GM12878 (cell line): ENCODE measurements at regions of chr1 and their contacts with region 1.

Region 1: GRCh38 chr1:185317034-185317885 is at the start of gene IVNS1ABP:
- DNase-seq: peak; percentile 86
- ATAC-seq: peak; percentile 77
- H3K4me3 ChIP-seq: peak within 1 kb of the TSS; percentile 79
- H3K27ac ChIP-seq: peak within 1 kb of the TSS; percentile 98
- H3K4me1 ChIP-seq: no peaks in the 10 kb centered on the region; the same call in 1 of the 2 replicates
- H3K27me3 ChIP-seq: no peaks in the 10 kb centered on the region
- CTCF ChIP-seq: peak; percentile 44 to 70 (median 57)
- EP300 ChIP-seq: 0 out of 4 replicates have a peak, but pooled peaks of 1 of the 2 experiments have one; percentile 4
- POLR2A ChIP-seq: peak; percentile 100
- RAD21 ChIP-seq: peak; percentile 70
- polyA plus RNA-seq, gene IVNS1ABP: 19.2 to 29.2 TPM

Region 2: DNA sequence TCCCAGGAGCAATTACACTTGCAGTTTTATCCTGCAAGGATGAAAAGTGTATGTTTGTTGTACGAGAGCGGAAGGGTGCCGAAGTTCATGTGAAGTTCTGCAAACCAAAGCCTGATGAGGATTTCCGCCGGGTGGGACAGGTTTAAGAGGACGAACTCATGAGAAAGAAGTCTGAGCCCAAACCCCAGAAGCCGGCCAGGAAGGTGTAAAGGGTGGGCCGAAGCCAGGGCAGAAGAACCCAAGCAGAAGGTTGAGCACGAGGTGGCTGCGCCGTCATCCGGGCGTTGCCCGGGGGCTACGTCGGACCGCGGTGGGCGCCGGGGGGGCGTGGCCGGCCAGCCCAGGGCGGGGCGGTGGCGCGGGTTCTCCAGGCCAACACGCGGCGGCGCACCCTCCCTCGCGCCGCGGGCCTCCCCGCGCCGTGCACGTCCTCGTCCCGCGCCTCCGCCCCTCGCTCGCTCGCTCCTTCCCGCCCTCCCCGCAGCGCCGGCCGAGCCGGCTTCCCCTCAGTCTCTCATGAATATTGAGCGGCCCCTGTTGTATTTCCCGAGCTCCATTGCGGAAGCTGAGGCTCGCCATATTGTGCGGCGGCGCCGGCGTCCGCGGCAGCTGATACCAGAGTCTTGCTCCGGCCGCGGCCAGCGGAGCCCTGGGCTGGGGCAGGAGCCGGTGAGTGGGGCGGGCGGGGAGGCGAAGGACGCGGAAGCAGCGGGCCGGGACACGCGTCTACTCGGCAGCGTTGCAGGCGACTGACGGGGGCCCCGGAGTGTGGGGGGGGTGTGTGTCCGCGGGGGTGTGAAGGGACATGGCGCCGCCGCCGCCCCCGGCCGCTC is 272.1 kb before region 1 on chr1 and contains the start of gene RNF2:
- CTCF ChIA-PET with region 1: no interaction called
- POLR2A ChIA-PET with region 1: no interaction called
- RAD21 ChIA-PET with region 1: no interaction called
- SMC1A ChIA-PET with region 1: no interaction called
- in situ Hi-C with region 1: no loop called
- intact Hi-C with region 1: loop called (anchors 2 kb)
- DNase-seq: peak; percentile 13
- ATAC-seq: peak; percentile 92
- H3K4me3 ChIP-seq: peak within 1 kb of the TSS; percentile 73
- H3K27ac ChIP-seq: no peak within 1 kb of the TSS
- H3K4me1 ChIP-seq: no peaks in the 10 kb centered on the region
- H3K27me3 ChIP-seq: no peaks in the 10 kb centered on the region
- CTCF ChIP-seq: no peak; a peak in 1 of 6 replicates
- EP300 ChIP-seq: no peak
- POLR2A ChIP-seq: peak; percentile 69
- RAD21 ChIP-seq: 0 out of 2 replicates have a peak, but pooled peaks have one; percentile 13
- polyA plus RNA-seq, gene RNF2: 4.8 to 5.2 TPM

Region 3: DNA sequence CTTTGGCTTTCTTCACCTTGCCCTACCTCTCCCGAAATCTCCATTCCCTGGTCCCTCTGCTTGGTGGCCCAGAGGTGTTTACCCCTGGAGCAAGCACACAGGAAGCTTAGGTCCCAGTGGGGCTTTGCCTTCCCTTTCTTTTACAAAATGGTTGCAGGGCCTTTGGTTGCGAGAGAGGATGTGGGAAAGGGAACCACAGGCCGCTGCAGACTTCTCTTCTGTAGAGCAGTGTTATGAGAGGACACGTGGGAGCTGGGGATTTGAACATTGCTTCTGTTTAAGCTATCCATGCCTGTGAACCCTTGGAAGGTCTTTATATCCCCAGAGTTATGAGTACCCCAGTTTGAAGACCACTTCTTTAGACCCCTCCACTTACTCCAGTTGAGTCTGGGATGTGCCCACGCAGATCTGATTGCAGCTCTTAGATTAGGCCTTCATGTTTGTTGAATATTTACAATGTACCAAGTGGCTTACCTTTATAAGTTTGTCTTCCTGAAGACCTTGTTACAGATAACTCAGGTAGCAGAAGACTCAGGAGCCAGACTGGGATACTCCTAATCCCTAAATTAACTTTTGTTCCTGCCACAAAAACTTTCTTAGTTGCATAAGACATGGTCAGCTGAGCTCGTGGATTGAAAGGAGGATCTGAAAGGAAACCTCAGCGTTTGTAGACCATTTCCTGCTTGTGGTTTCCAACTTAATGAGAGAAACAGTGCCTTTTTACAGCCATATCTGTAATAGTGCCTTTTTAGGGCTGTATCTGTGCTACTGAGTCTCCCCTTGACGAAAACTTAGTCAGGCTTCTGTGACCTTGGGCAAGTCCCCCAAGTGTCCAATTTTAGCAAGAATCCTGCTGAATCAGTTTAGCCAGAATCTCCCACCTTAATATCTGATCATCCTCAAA is 21.7 kb after region 1 on chr1:
- CTCF ChIA-PET with region 1: interaction called, 29 read pairs
- POLR2A ChIA-PET with region 1: interaction called, 15 read pairs
- RAD21 ChIA-PET with region 1: interaction called, 36 read pairs
- SMC1A ChIA-PET with region 1: interaction called, 54 read pairs
- in situ Hi-C with region 1: no loop called
- intact Hi-C with region 1: loop called (anchors 1 kb)
- DNase-seq: peak; percentile 86
- ATAC-seq: peak; percentile 97
- H3K4me3 ChIP-seq: no peak overlapping the region
- H3K27ac ChIP-seq: peak overlapping the region; percentile 59
- H3K4me1 ChIP-seq: peaks cover 21% of the 10 kb centered on the region
- H3K27me3 ChIP-seq: no peaks in the 10 kb centered on the region
- CTCF ChIP-seq: no peak
- EP300 ChIP-seq: peak; percentile 93 to 97
- POLR2A ChIP-seq: no peak
- RAD21 ChIP-seq: no peak

Region 4: GRCh38 chr1:185439727-185440415 is 122.6 kb after region 1 on chr1:
- CTCF ChIA-PET with region 1: no interaction called
- POLR2A ChIA-PET with region 1: no interaction called
- RAD21 ChIA-PET with region 1: interaction called, 10 read pairs
- SMC1A ChIA-PET with region 1: interaction called, 6 read pairs
- in situ Hi-C with region 1: no loop called
- intact Hi-C with region 1: no loop called
- DNase-seq: peak; percentile 20
- ATAC-seq: peak; percentile 85
- H3K4me3 ChIP-seq: no peak overlapping the region
- H3K27ac ChIP-seq: no peak overlapping the region
- H3K4me1 ChIP-seq: no peaks in the 10 kb centered on the region
- H3K27me3 ChIP-seq: no peaks in the 10 kb centered on the region
- CTCF ChIP-seq: no peak
- EP300 ChIP-seq: peak; percentile 15 to 34; a peak in 1 of 4 replicates
- POLR2A ChIP-seq: no peak
- RAD21 ChIP-seq: no peak

Region 5: GRCh38 chr1:185595835-185596667 is 278.8 kb after region 1 on chr1:
- CTCF ChIA-PET with region 1: interaction called, 14 read pairs
- POLR2A ChIA-PET with region 1: interaction called, 4 read pairs
- RAD21 ChIA-PET with region 1: interaction called, 39 read pairs
- SMC1A ChIA-PET with region 1: interaction called, 18 read pairs
- in situ Hi-C with region 1: no loop called
- intact Hi-C with region 1: loop called (anchors 1 kb)
- DNase-seq: peak; percentile 13
- ATAC-seq: peak; percentile 98
- H3K4me3 ChIP-seq: no peak overlapping the region
- H3K27ac ChIP-seq: no peak overlapping the region
- H3K4me1 ChIP-seq: no peaks in the 10 kb centered on the region
- H3K27me3 ChIP-seq: no peaks in the 10 kb centered on the region
- CTCF ChIP-seq: peak; percentile 71 to 86 (median 83)
- EP300 ChIP-seq: no peak
- POLR2A ChIP-seq: no peak
- RAD21 ChIP-seq: peak; percentile 72

Region 6: GRCh38 chr1:185681034-185681633 is 363.9 kb after region 1 on chr1:
- CTCF ChIA-PET with region 1: interaction called, 10 read pairs
- POLR2A ChIA-PET with region 1: no interaction called
- RAD21 ChIA-PET with region 1: interaction called, 10 read pairs
- SMC1A ChIA-PET with region 1: interaction called, 5 read pairs
- in situ Hi-C with region 1: no loop called
- intact Hi-C with region 1: loop called (anchors 2 kb)
- DNase-seq: peak; percentile 21
- ATAC-seq: peak; percentile 89
- H3K4me3 ChIP-seq: no peak overlapping the region
- H3K27ac ChIP-seq: no peak overlapping the region
- H3K4me1 ChIP-seq: no peaks in the 10 kb centered on the region
- H3K27me3 ChIP-seq: no peaks in the 10 kb centered on the region
- CTCF ChIP-seq: peak; percentile 43 to 65 (median 49); a peak in 4 of 6 replicates
- EP300 ChIP-seq: no peak
- POLR2A ChIP-seq: no peak
- RAD21 ChIP-seq: peak; percentile 74